ENCODE measurements at regions of chr11 and their contacts with region 1.

Region 1: DNA sequence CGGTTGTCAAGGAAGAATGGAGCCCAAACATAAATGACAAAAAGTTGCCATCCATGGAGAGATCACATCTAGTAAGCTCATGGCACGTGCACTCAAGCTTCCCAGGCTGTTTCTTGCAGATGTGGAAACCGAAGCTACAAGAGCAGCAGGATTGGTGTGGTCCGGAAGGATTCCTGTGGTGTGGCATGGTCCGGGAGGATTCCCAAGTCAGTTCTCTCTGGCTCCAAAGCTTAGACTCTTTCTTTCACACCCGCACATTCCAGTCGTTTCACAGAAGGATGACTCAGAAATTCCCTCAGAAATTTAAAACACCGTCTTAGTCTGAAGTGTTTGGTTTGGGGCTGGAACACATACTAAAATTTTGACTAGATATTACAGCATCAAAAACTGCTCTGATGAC is 78.0 kb upstream of the DRD2 start:
- DNase-seq: peak; percentile 85
- H3K4me3 ChIP-seq: no peak overlapping the region
- H3K27ac ChIP-seq: peak overlapping the region; percentile 69
- H3K4me1 ChIP-seq: peaks cover 49% of the 10 kb centered on the region
- H3K27me3 ChIP-seq: no peaks in the 10 kb centered on the region
- CTCF ChIP-seq: no peak

Region 2: GRCh38 chr11:113176599-113177365 is 376.5 kb before region 1 on chr11:
- CTCF ChIA-PET with region 1: no interaction called
- dilution Hi-C with region 1: no loop called
- in situ Hi-C with region 1: no loop called
- intact Hi-C with region 1: no loop called
- DNase-seq: peak; percentile 53
- H3K4me3 ChIP-seq: no peak overlapping the region
- H3K27ac ChIP-seq: no peak overlapping the region
- H3K4me1 ChIP-seq: peaks cover 5% of the 10 kb centered on the region
- H3K27me3 ChIP-seq: no peaks in the 10 kb centered on the region
- CTCF ChIP-seq: no peak

Region 3: GRCh38 chr11:113628912-113629311 is 75.7 kb after region 1 on chr11:
- CTCF ChIA-PET with region 1: no interaction called
- dilution Hi-C with region 1: no loop called
- in situ Hi-C with region 1: no loop called
- intact Hi-C with region 1: no loop called
- DNase-seq: no peak
- H3K4me3 ChIP-seq: no peak overlapping the region
- H3K27ac ChIP-seq: no peak overlapping the region
- H3K4me1 ChIP-seq: peaks cover 5% of the 10 kb centered on the region
- H3K27me3 ChIP-seq: no peaks in the 10 kb centered on the region
- CTCF ChIP-seq: no peak

Region 4: DNA sequence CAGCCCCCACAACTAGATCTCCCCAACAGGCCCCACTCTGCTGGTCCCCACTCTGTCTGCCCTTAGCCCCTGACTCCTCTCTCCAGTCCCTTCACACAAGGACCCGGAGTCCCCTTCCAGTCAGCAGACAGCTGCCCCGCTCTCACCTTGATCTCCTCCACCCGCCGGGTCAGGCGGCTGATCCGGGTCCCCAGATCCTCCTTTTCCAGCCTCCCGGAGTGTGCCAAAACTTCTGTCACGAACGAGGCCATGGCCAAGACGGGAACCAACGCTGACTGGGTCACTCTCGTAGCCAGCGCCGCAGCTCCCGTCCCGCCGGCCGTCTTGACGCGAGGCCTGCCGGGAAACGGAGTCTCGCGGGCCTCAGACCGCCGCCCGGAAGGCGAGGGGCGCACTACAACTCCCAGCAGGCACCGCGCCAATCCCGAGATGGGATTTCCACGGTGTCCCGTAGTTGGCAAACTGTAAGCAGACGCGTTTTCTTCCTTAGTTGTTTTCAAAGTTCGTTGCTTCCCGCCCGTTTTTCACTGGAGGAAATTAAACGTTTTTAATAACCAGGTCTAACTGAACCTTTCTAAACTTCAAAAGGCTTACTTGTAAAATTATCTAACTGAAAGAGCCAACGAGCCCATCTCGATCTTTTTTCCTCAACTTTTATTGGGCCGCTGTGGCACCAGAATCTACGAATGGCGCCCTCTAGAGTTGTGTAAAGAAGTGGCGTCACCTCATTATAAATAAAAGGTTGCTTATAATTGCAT is 220.4 kb after region 1 on chr11 and contains the start of gene ZW10:
- CTCF ChIA-PET with region 1: no interaction called
- dilution Hi-C with region 1: no loop called
- in situ Hi-C with region 1: no loop called
- intact Hi-C with region 1: loop called (anchors 5 kb)
- DNase-seq: peak; percentile 96
- H3K4me3 ChIP-seq: peak within 1 kb of the TSS; percentile 66 to 87 (median 66)
- H3K27ac ChIP-seq: peak within 1 kb of the TSS; percentile 86
- H3K4me1 ChIP-seq: peaks cover 18% of the 10 kb centered on the region
- H3K27me3 ChIP-seq: no peaks in the 10 kb centered on the region
- CTCF ChIP-seq: peak; percentile 80 to 86
- total RNA-seq, gene ZW10: 18.6 to 22.5 TPM

Measured in mammary epithelial cell (primary cell).